Stomach (tissue), 19 donors: ENCODE measurements at regions of chr9 and their contacts with region 1.

Region 1: GRCh38 chr9:78261403-78262001 is 25.6 kb downstream of the CEP78 start:
- DNase-seq: peak in 1 of 2 donors; percentile 57
- H3K4me3 ChIP-seq: no peak overlapping the region
- H3K27ac ChIP-seq: no peak overlapping the region
- H3K4me1 ChIP-seq: peaks cover 0 to 4% (median 0%) of the 10 kb centered on the region in 4 donors
- H3K27me3 ChIP-seq: no peaks in the 10 kb centered on the region
- CTCF ChIP-seq: peak in 5 of 7 experiments; percentile 34 to 73 (median 63)
- EP300 ChIP-seq: no peak
- POLR2A ChIP-seq: no peak

Region 2: GRCh38 chr9:78369639-78370219 is 108.2 kb after region 1 on chr9:
- intact Hi-C with region 1: loop called (anchors 10 kb)
- DNase-seq: peak; percentile 71 to 89
- H3K4me3 ChIP-seq: no peak overlapping the region
- H3K27ac ChIP-seq: no peak overlapping the region
- H3K4me1 ChIP-seq: peaks cover 0 to 13% (median 4%) of the 10 kb centered on the region in 4 donors
- H3K27me3 ChIP-seq: peaks cover 0 to 29% (median 0%) of the 10 kb centered on the region in 3 donors
- CTCF ChIP-seq: peak in 5 of 7 experiments; percentile 55 to 82 (median 67)
- EP300 ChIP-seq: no peak
- POLR2A ChIP-seq: no peak